Adrenal gland (tissue), 19 donors: ENCODE measurements at regions of chr17 and their contacts with region 1.

Region 1: GRCh38 chr17:46044286-46044928 is 45.4 kb downstream of the STH start:
- DNase-seq: peak; percentile 79 to 94 (median 84)
- H3K4me3 ChIP-seq: no peak overlapping the region
- H3K27ac ChIP-seq: peak overlapping the region in 4 of 5 donors; percentile 19 to 68 (median 34)
- H3K4me1 ChIP-seq: peaks cover 14 to 35% of the 10 kb centered on the region in 2 donors
- H3K27me3 ChIP-seq: no peaks in the 10 kb centered on the region
- CTCF ChIP-seq: peak; percentile 74 to 98 (median 90)
- POLR2A ChIP-seq: no peak

Region 2: GRCh38 chr17:46002311-46002972 is 42.0 kb before region 1 on chr17:
- intact Hi-C with region 1: loop called in 1 of 2 experiments (anchors 5 kb)
- DNase-seq: peak; percentile 46 to 91 (median 79)
- H3K4me3 ChIP-seq: no peak overlapping the region
- H3K27ac ChIP-seq: no peak overlapping the region
- H3K4me1 ChIP-seq: peaks cover 0 to 14% of the 10 kb centered on the region in 2 donors
- H3K27me3 ChIP-seq: no peaks in the 10 kb centered on the region
- CTCF ChIP-seq: peak; percentile 91 to 98 (median 94)
- POLR2A ChIP-seq: no peak

Region 3: DNA sequence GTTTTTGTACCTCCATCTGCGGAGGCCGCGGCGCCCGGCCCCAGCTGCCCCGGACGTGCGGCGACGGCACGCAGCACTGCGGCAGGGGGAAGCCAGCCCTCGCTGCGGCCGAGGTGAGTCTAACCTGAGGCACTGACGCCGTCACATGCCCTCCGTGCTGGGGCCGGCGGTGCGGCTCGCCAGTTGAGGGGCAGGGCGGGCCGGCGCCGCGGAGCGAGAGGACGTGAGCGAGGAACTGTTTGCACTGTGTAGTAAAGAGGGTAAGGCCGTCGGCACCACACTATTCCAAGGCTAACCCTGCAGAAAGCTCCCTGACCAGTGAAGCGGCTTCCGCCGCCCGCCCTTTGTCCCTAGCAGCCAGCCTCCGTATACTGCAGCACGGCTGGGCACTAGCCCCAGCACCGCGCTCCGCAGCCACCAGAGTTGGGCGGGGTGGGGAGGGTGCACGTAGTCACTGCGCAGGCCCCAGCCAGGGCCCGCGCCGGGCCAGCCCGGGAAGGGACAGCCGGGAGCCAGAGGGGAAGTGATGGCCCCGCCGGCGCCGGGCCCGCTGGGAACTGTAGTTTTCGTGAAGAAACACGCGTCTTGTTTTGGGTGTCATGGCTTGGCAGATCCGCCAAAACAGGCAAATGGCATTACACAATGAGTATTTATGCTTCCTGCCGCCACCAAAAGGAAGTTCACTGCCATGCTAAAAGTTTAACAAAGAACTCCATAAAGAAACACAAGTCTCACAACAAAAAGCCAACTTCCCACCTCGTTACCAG is 149.4 kb after region 1 on chr17:
- intact Hi-C with region 1: loop called (anchors 2 to 5 kb)
- DNase-seq: peak; percentile 96 to 99 (median 97)
- H3K4me3 ChIP-seq: peak overlapping the region; percentile 37 to 98 (median 76)
- H3K27ac ChIP-seq: peak overlapping the region; percentile 86 to 100 (median 99)
- H3K4me1 ChIP-seq: peaks cover 11 to 39% of the 10 kb centered on the region in 2 donors
- H3K27me3 ChIP-seq: no peaks in the 10 kb centered on the region
- CTCF ChIP-seq: peak in 2 of 6 experiments; percentile 34 to 37
- POLR2A ChIP-seq: peak; percentile 8 to 93

Region 4: DNA sequence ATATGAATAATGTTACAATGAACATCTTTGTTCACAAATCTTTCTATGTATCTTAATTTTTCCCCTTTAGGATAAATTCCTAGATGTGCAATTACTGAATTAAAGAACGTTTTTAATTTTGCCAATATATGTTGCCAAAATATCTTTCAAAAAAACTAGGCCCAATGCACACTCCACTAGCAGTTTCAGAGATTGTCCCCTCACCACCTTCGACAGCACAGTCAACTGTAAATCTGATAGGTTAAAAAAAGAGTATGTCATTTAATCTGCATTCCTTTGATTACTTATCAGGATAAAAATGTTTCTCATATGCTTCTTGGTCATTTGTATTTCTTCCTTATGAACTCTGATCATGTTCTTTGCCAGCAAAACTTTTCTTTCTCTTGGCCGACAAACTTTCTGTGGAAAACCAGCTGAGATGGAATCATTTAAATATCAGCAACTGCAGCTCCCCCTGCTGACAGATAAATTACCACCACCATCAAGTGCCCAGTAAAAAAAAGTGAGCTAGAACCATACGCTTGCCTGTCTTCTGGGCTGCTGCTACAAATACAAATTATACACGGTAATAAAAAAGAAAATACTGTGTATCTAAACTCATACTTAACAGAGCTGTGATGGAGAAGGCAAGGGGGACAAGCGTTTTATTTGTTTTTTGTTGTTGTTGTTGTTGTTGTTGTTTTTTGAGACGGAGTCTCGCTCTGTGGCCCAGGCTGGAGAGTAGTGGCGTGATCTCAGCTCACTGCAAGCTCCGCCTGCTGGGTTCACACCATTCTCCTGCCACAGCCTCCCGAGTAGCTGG is 168.4 kb after region 1 on chr17:
- intact Hi-C with region 1: loop called in 1 of 2 experiments (anchors 5 kb)
- DNase-seq: peak; percentile 67 to 88 (median 76)
- H3K4me3 ChIP-seq: no peak overlapping the region
- H3K27ac ChIP-seq: peak overlapping the region in 1 of 5 donors; percentile 48
- H3K4me1 ChIP-seq: peaks cover 12 to 19% of the 10 kb centered on the region in 2 donors
- H3K27me3 ChIP-seq: no peaks in the 10 kb centered on the region
- CTCF ChIP-seq: peak; percentile 60 to 91 (median 88)
- POLR2A ChIP-seq: no peak